ENCODE measurements at regions of chr7 and their contacts with region 1.

Region 1: DNA sequence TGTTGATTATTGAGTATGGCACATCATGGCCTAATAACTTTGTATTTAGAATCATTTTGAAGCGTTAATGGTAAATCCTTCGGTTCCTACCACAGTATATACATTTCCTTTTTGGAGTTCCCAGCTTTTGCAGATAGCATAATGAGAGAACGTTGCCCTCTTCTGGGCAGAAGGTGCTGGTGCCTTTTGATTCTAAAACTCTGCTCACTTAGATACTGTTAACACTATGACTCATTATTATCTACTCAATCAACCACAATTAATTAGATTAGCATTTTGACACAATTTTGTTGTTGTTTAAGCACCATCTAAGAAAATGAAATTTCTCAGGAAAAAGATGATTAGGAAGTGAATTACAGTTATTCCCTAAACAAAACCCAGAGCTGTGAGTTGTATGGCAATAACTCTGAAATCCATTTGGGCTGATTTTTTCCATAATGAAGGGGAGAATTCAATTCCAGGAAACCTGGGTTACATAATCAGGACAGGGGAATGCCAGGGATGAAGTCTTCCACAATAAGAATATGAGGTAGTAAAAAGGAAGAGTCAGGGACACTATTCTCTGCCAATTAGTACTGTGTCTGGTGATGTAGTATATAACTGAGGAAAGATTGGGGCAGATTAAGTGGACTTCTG is 11.5 kb upstream of the DLD start:
- DNase-seq: peak in 5 of 9 donors; percentile 30 to 50 (median 42)
- ATAC-seq: peak; percentile 85
- H3K4me3 ChIP-seq: no peak overlapping the region
- H3K4me3 Mint-ChIP-seq: no peak overlapping the region
- H3K27ac ChIP-seq: no peak overlapping the region
- H3K27ac Mint-ChIP-seq: peak overlapping the region in 1 of 9 donors; percentile 53
- H3K4me1 ChIP-seq: peaks cover 3 to 11% of the 10 kb centered on the region in 2 donors
- H3K4me1 Mint-ChIP-seq: peaks cover 5 to 34% (median 24%) of the 10 kb centered on the region in 7 donors
- H3K27me3 ChIP-seq: peaks cover 0 to 4% of the 10 kb centered on the region in 2 donors
- H3K27me3 Mint-ChIP-seq: peaks cover 0 to 23% (median 9%) of the 10 kb centered on the region in 5 donors

Region 2: GRCh38 chr7:106793015-106793975 is 1086.2 kb before region 1 on chr7:
- CTCF ChIA-PET with region 1: interaction called, 3 read pairs
- POLR2A ChIA-PET with region 1: no interaction called
- intact Hi-C with region 1: loop called in 1 of 2 experiments (anchors 1 kb)
- DNase-seq: peak in 6 of 9 donors; percentile 31 to 59 (median 51)
- ATAC-seq: peak; percentile 76
- H3K4me3 ChIP-seq: no peak overlapping the region
- H3K4me3 Mint-ChIP-seq: no peak overlapping the region
- H3K27ac ChIP-seq: no peak overlapping the region
- H3K27ac Mint-ChIP-seq: no peak overlapping the region
- H3K4me1 ChIP-seq: no peaks in the 10 kb centered on the region
- H3K4me1 Mint-ChIP-seq: peaks cover 0 to 4% (median 0%) of the 10 kb centered on the region in 7 donors
- H3K27me3 ChIP-seq: no peaks in the 10 kb centered on the region
- H3K27me3 Mint-ChIP-seq: no peaks in the 10 kb centered on the region

Region 3: DNA sequence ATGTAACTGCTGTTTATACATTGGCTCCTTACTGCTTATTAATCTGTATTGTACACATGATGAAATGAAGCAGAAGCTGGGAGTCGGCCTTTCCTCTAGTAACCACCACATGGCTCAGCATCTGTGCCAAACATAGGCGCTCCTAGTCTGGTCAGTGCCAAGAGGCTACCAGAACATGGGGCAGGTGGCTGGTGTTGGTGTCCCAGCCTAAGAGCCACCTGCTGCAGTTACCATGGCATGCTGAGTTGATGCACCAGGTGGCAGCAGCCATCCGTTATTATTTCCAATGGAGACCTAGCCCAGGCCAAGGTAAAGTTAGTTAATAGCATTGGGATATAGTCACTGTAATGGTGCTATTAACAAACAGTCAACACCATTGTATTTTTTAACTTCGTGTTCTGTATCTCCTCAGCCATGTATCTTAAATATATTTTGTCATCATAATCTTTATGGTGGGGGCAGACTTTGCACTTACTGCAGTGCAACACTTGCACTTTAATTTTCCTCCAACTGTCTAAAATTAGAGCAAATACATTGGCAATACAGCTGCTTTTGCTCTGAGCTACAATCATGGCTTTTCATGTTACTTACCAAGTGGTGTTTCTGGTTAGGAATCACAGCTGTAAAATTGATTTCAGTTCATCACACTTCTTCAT is 677.6 kb before region 1 on chr7:
- CTCF ChIA-PET with region 1: no interaction called
- POLR2A ChIA-PET with region 1: interaction called, 3 read pairs
- intact Hi-C with region 1: loop called (anchors 5 kb)
- DNase-seq: peak in 2 of 9 donors; percentile 6 to 15
- ATAC-seq: peak; percentile 60
- H3K4me3 ChIP-seq: no peak overlapping the region
- H3K4me3 Mint-ChIP-seq: no peak overlapping the region
- H3K27ac ChIP-seq: no peak overlapping the region
- H3K27ac Mint-ChIP-seq: peak overlapping the region in 1 of 9 donors; percentile 32
- H3K4me1 ChIP-seq: no peaks in the 10 kb centered on the region
- H3K4me1 Mint-ChIP-seq: peaks cover 0 to 7% (median 0%) of the 10 kb centered on the region in 7 donors
- H3K27me3 ChIP-seq: no peaks in the 10 kb centered on the region
- H3K27me3 Mint-ChIP-seq: no peaks in the 10 kb centered on the region

Region 4: GRCh38 chr7:107563775-107564552 is 315.6 kb before region 1 on chr7 and contains the starts of genes COG5 and DUS4L:
- CTCF ChIA-PET with region 1: no interaction called
- POLR2A ChIA-PET with region 1: no interaction called
- intact Hi-C with region 1: loop called (anchors 2 to 5 kb)
- DNase-seq: peak; percentile 78 to 88 (median 84)
- ATAC-seq: peak; percentile 91
- H3K4me3 ChIP-seq: peak within 1 kb of the TSS; percentile 86
- H3K4me3 Mint-ChIP-seq: peak within 1 kb of the TSS; percentile 76 to 99 (median 91)
- H3K27ac ChIP-seq: peak within 1 kb of the TSS; percentile 98
- H3K27ac Mint-ChIP-seq: peak within 1 kb of the TSS; percentile 87 to 97 (median 93)
- H3K4me1 ChIP-seq: peaks cover 40 to 50% of the 10 kb centered on the region in 2 donors
- H3K4me1 Mint-ChIP-seq: peaks cover 40 to 76% (median 62%) of the 10 kb centered on the region in 7 donors
- H3K27me3 ChIP-seq: no peaks in the 10 kb centered on the region
- H3K27me3 Mint-ChIP-seq: no peaks in the 10 kb centered on the region
- total RNA-seq, gene COG5: 38.3 to 77.0 (median 60.7) TPM
- total RNA-seq, gene DUS4L: 10.0 to 14.1 (median 11.2) TPM

Region 5: DNA sequence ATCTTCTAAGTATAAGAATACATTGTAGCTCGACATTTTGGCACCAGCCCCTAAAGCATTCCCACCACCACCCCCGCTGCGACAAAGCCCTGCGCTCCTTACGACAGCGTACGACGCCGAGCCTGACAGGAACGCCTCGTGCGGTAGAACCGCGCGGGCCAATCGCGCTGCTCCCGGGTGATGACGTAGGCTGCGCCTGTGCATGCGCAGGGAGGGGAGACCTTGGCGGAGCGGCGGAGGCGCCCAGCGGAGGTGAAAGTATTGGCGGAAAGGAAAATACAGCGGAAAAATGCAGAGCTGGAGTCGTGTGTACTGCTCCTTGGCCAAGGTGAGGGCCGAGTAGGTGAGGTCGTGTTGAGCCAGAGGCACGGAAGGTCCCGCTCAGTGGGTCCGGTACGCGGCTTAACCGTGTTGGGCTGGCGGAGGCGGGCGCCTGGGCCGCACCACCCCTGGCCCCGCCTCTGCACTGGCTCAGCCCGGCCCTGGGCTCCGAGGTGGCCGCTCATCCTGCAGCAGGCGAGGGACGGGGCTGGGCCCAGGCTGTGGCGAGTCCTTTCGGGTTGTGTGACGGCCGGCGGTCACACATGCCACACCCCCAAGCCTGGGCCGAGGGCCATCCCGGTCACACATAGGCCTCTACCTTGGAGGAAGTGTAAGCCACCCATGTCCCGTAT is 11.6 kb after region 1 on chr7 and contains the start of gene DLD:
- CTCF ChIA-PET with region 1: interaction called, 9 read pairs
- POLR2A ChIA-PET with region 1: interaction called, 9 read pairs
- intact Hi-C with region 1: loop called (anchors 1 kb)
- DNase-seq: peak; percentile 89 to 94 (median 93)
- ATAC-seq: peak; percentile 98
- H3K4me3 ChIP-seq: peak within 1 kb of the TSS; percentile 93
- H3K4me3 Mint-ChIP-seq: peak within 1 kb of the TSS; percentile 89 to 100 (median 97)
- H3K27ac ChIP-seq: peak within 1 kb of the TSS; percentile 97
- H3K27ac Mint-ChIP-seq: peak within 1 kb of the TSS; percentile 94 to 100 (median 98)
- H3K4me1 ChIP-seq: peaks cover 5 to 35% of the 10 kb centered on the region in 2 donors
- H3K4me1 Mint-ChIP-seq: peaks cover 20 to 55% (median 52%) of the 10 kb centered on the region in 7 donors
- H3K27me3 ChIP-seq: no peaks in the 10 kb centered on the region
- H3K27me3 Mint-ChIP-seq: peaks cover 0 to 3% (median 0%) of the 10 kb centered on the region in 5 donors
- total RNA-seq, gene DLD: 44.5 to 69.3 (median 53.7) TPM

Region 6: DNA sequence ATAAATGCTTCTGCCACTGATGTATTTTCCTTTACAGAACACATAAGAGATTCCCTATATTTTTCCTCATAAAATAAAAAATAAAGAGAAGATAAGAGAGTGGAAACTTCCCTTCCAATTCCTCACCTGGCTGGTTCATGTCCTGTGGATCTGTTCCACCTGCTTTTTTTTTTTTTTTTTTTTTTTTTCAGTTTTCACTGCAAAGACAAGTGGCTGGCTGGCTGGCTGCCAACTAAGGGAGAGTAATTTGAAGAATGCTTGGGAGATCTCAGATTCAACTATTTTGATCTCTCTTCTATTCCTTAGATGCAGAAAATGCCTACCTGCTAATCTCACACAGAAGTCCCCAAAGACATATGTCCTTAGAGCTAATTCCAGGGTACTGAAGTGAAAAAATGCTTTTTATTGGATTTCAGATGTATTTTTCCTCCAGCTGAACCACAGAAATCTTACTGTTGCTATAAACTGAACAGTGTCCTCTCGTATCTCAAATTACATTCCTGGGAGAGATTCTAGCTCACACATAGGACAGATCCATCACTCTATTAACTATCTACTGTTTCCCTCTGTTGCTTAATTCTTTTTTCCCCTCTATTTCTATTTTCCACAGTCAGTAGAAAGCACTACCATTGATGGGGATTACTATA is 455.9 kb after region 1 on chr7:
- CTCF ChIA-PET with region 1: no interaction called
- POLR2A ChIA-PET with region 1: no interaction called
- intact Hi-C with region 1: no loop called
- DNase-seq: peak in 2 of 9 donors; percentile 1 to 2
- ATAC-seq: no peak
- H3K4me3 ChIP-seq: no peak overlapping the region
- H3K4me3 Mint-ChIP-seq: no peak overlapping the region
- H3K27ac ChIP-seq: no peak overlapping the region
- H3K27ac Mint-ChIP-seq: no peak overlapping the region
- H3K4me1 ChIP-seq: no peaks in the 10 kb centered on the region
- H3K4me1 Mint-ChIP-seq: peaks cover 0 to 5% (median 0%) of the 10 kb centered on the region in 7 donors
- H3K27me3 ChIP-seq: no peaks in the 10 kb centered on the region
- H3K27me3 Mint-ChIP-seq: peaks cover 0 to 9% (median 0%) of the 10 kb centered on the region in 5 donors

Measured in naive thymus-derived CD4-positive, alpha-beta T cell (primary cell).